Heart left ventricle (tissue), 16 donors: ENCODE measurements at regions of chr5 and their contacts with region 1.

Region 1: GRCh38 chr5:84382363-84383295 is 2.1 kb downstream of the EDIL3 start:
- DNase-seq: peak; percentile 20 to 70 (median 54)
- ATAC-seq: peak; percentile 43 to 72 (median 65)
- H3K4me3 ChIP-seq: peak overlapping the region; percentile 37 to 75 (median 58)
- H3K27ac ChIP-seq: peak overlapping the region; percentile 37 to 80 (median 60)
- H3K4me1 ChIP-seq: peaks cover 0 to 26% (median 0%) of the 10 kb centered on the region in 12 donors
- H3K27me3 ChIP-seq: peaks cover 0 to 47% (median 28%) of the 10 kb centered on the region in 9 donors
- CTCF ChIP-seq: no peak
- POLR2A ChIP-seq: no peak

Region 2: DNA sequence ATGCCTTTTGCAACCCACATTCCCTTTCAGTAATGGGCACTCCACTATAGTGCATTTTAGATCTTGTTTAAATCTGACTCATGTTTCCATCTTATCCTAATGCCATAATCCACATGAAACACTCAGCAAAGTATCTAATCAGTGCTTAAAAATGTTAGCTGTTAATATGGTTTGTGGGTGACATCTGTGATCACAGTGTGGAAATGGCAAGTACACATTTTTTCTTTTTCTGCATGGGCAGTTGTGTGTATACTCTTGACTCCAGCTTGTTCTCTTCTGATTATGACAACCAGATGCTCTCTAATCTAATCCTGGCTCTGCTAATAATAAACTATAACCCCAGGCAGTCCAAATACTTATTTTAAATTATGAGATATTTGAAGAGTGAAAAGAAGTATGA is 101.2 kb before region 1 on chr5:
- intact Hi-C with region 1: loop called in 2 of 10 experiments (anchors 5 kb)
- DNase-seq: no peak
- ATAC-seq: peak in 2 of 4 donors; percentile 50 to 60
- H3K4me3 ChIP-seq: no peak overlapping the region
- H3K27ac ChIP-seq: no peak overlapping the region
- H3K4me1 ChIP-seq: peaks cover 0 to 15% (median 1%) of the 10 kb centered on the region in 12 donors
- H3K27me3 ChIP-seq: no peaks in the 10 kb centered on the region
- CTCF ChIP-seq: no peak
- POLR2A ChIP-seq: no peak

Region 3: GRCh38 chr5:84287951-84288350 is 94.7 kb before region 1 on chr5:
- intact Hi-C with region 1: loop called in 2 of 10 experiments (anchors 5 kb)
- DNase-seq: no peak
- ATAC-seq: no peak
- H3K4me3 ChIP-seq: no peak overlapping the region
- H3K27ac ChIP-seq: no peak overlapping the region
- H3K4me1 ChIP-seq: peaks cover 0 to 15% (median 4%) of the 10 kb centered on the region in 12 donors
- H3K27me3 ChIP-seq: no peaks in the 10 kb centered on the region
- CTCF ChIP-seq: no peak
- POLR2A ChIP-seq: no peak